ENCODE measurements at regions of chr2 and their contacts with region 1.

Region 1: GRCh38 chr2:162091325-162092007 is 17.5 kb upstream of the DPP4 start:
- DNase-seq: peak; percentile 42
- H3K4me3 Mint-ChIP-seq: peak overlapping the region; percentile 38
- H3K27ac Mint-ChIP-seq: peak overlapping the region; percentile 46
- H3K4me1 Mint-ChIP-seq: peaks cover 45% of the 10 kb centered on the region
- H3K27me3 Mint-ChIP-seq: no peaks in the 10 kb centered on the region
- CTCF ChIP-seq: no peak

Region 2: DNA sequence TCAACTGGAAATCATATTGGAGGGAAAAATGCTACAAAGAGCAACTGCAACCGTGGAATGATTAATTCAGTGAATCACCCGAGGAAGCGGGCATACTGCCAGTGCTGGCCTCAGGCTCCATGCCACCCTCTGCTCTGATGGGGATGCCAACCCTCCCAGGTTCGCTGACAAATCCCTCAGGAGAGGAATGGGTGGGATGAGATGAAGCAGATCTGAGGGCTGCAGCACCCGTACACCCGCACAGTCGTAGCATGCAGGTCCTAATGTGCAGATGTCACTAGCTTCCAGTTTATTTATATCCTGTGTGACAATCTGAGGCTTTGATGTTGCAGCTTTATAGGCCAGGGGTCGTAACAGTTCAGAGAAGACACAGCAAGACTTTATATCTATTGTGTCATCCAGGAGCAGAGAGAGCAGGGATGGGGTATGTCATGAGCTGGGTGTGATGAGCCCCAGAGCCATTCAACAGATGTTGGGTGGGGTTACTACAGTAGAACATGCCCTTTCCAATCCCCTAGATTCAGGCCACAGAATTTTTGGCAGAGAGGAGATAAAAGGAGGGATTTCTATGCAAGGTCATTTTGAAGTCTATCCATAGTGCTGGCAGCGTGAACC is 62.1 kb before region 1 on chr2:
- CTCF ChIA-PET with region 1: interaction called, 3 read pairs
- POLR2A ChIA-PET with region 1: interaction called, 21 read pairs
- intact Hi-C with region 1: loop called (anchors 2 kb)
- DNase-seq: peak; percentile 87
- H3K4me3 Mint-ChIP-seq: no peak overlapping the region
- H3K27ac Mint-ChIP-seq: no peak overlapping the region
- H3K4me1 Mint-ChIP-seq: peaks cover 26% of the 10 kb centered on the region
- H3K27me3 Mint-ChIP-seq: no peaks in the 10 kb centered on the region
- CTCF ChIP-seq: no peak

Region 3: DNA sequence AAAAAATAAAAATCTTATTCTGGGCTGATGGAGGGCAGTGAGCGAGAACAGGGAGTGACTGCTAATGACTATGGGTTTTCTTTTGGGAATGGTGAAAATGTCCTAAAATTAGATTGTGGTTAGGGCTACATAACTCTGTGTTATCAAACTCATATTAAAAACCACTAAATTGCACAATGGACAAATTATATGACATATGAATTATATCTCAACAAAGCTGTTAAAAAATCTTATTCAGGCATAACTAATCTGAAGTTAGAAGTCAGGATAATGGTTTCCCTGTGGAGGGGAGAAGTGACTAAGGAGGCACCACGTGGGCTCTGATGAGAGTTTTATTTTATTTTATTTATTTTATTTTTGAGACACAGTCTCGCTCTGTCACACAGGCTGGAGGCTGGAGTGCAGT is 14.7 kb after region 1 on chr2:
- CTCF ChIA-PET with region 1: interaction called, 4 read pairs
- POLR2A ChIA-PET with region 1: interaction called, 41 read pairs
- intact Hi-C with region 1: no loop called
- DNase-seq: no peak
- H3K4me3 Mint-ChIP-seq: no peak overlapping the region
- H3K27ac Mint-ChIP-seq: peak overlapping the region; percentile 46
- H3K4me1 Mint-ChIP-seq: peaks cover 13% of the 10 kb centered on the region
- H3K27me3 Mint-ChIP-seq: no peaks in the 10 kb centered on the region
- CTCF ChIP-seq: no peak

Region 4: GRCh38 chr2:162113776-162114168 is 22.3 kb after region 1 on chr2:
- CTCF ChIA-PET with region 1: interaction called, 4 read pairs
- POLR2A ChIA-PET with region 1: interaction called, 41 read pairs
- intact Hi-C with region 1: loop called (anchors 1 kb)
- DNase-seq: peak; percentile 72
- H3K4me3 Mint-ChIP-seq: no peak overlapping the region
- H3K27ac Mint-ChIP-seq: no peak overlapping the region
- H3K4me1 Mint-ChIP-seq: peaks cover 16% of the 10 kb centered on the region
- H3K27me3 Mint-ChIP-seq: no peaks in the 10 kb centered on the region
- CTCF ChIP-seq: no peak

Region 5: GRCh38 chr2:162244541-162245031 is 153.1 kb after region 1 on chr2:
- CTCF ChIA-PET with region 1: no interaction called
- POLR2A ChIA-PET with region 1: interaction called, 4 read pairs
- intact Hi-C with region 1: loop called (anchors 2 kb)
- DNase-seq: peak; percentile 93
- H3K4me3 Mint-ChIP-seq: peak overlapping the region; percentile 60
- H3K27ac Mint-ChIP-seq: peak overlapping the region; percentile 92
- H3K4me1 Mint-ChIP-seq: peaks cover 47% of the 10 kb centered on the region
- H3K27me3 Mint-ChIP-seq: no peaks in the 10 kb centered on the region
- CTCF ChIP-seq: no peak

Region 6: DNA sequence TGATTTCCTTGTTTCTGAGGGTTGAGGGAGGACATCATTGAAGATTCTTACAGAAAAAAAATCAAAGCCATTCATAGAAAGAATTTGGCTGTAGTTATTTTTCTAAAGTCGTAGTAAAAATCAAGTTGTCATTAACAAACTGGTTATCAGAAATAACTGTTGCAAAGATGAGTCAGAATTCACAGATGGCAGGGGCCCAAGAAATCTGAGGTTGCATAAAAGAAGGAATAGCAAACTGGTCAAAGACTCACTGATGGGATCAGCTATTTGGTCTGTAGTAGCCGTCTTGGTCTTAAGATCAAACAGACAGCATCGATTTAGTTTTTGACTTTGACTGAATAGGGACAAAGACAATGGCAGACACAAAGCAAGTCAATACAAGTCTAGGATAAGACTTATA is 1310.0 kb after region 1 on chr2:
- CTCF ChIA-PET with region 1: no interaction called
- POLR2A ChIA-PET with region 1: no interaction called
- intact Hi-C with region 1: no loop called
- DNase-seq: peak; percentile 81
- H3K4me3 Mint-ChIP-seq: no peak overlapping the region
- H3K27ac Mint-ChIP-seq: no peak overlapping the region
- H3K4me1 Mint-ChIP-seq: peaks cover 6% of the 10 kb centered on the region
- H3K27me3 Mint-ChIP-seq: no peaks in the 10 kb centered on the region
- CTCF ChIP-seq: no peak